CD4-positive, alpha-beta T cell (primary cell): ENCODE measurements at regions of chr5 and their contacts with region 1.

Region 1: GRCh38 chr5:126600631-126601511 is at the start of gene PHAX:
- DNase-seq: peak; percentile 43 to 88 (median 66)
- ATAC-seq: peak; percentile 93
- H3K4me3 ChIP-seq: peak within 1 kb of the TSS; percentile 82
- H3K4me3 Mint-ChIP-seq: peak within 1 kb of the TSS; percentile 92
- H3K27ac ChIP-seq: peak within 1 kb of the TSS; percentile 61 to 66
- H3K27ac Mint-ChIP-seq: peak within 1 kb of the TSS; percentile 79
- H3K4me1 ChIP-seq: peaks cover 26% of the 10 kb centered on the region
- H3K4me1 Mint-ChIP-seq: peaks cover 36% of the 10 kb centered on the region
- H3K27me3 ChIP-seq: no peaks in the 10 kb centered on the region
- H3K27me3 Mint-ChIP-seq: no peaks in the 10 kb centered on the region
- CTCF ChIP-seq: peak; percentile 69
- total RNA-seq, gene PHAX: 31.2 to 32.9 TPM

Region 2: GRCh38 chr5:126339215-126339805 is 261.6 kb before region 1 on chr5:
- CTCF ChIA-PET with region 1: interaction called, 6 read pairs
- POLR2A ChIA-PET with region 1: no interaction called
- intact Hi-C with region 1: loop called (anchors 1 to 5 kb)
- DNase-seq: peak in 10 of 14 experiments; percentile 12 to 79 (median 40)
- ATAC-seq: peak; percentile 46
- H3K4me3 ChIP-seq: no peak overlapping the region
- H3K4me3 Mint-ChIP-seq: no peak overlapping the region
- H3K27ac ChIP-seq: no peak overlapping the region
- H3K27ac Mint-ChIP-seq: no peak overlapping the region
- H3K4me1 ChIP-seq: no peaks in the 10 kb centered on the region
- H3K4me1 Mint-ChIP-seq: no peaks in the 10 kb centered on the region
- H3K27me3 ChIP-seq: peaks cover 4 to 21% of the 10 kb centered on the region in 2 experiments
- H3K27me3 Mint-ChIP-seq: peaks cover 42% of the 10 kb centered on the region
- CTCF ChIP-seq: peak; percentile 82

Region 3: GRCh38 chr5:126354012-126354857 is 246.6 kb before region 1 on chr5:
- CTCF ChIA-PET with region 1: interaction called, 3 read pairs
- POLR2A ChIA-PET with region 1: no interaction called
- intact Hi-C with region 1: loop called (anchors 1 to 2 kb)
- DNase-seq: peak in 3 of 14 experiments; percentile 57 to 70 (median 68)
- ATAC-seq: peak; percentile 74
- H3K4me3 ChIP-seq: no peak overlapping the region
- H3K4me3 Mint-ChIP-seq: peak overlapping the region; percentile 13
- H3K27ac ChIP-seq: no peak overlapping the region
- H3K27ac Mint-ChIP-seq: no peak overlapping the region
- H3K4me1 ChIP-seq: peaks cover 7% of the 10 kb centered on the region
- H3K4me1 Mint-ChIP-seq: peaks cover 16% of the 10 kb centered on the region
- H3K27me3 ChIP-seq: no peaks in the 10 kb centered on the region
- H3K27me3 Mint-ChIP-seq: peaks cover 4% of the 10 kb centered on the region
- CTCF ChIP-seq: peak; percentile 78

Region 4: DNA sequence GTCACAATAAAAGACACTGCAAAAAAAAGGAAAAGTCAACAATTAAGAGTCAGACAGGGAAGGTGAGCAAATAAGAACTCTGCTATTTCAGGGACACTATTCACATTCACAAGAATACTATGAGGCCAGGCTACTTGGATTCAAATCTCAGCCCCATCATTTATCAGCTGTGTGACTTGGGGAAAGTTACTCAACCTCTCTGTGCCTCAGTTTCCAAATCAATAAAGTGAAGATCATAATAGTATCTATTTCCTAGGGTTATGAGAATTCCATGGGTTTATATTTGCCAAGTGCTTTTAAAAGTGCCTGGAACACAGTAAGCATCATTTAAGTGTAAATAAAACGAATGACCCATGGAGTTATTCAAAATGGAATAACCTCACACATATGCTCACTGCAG is 62.3 kb before region 1 on chr5:
- CTCF ChIA-PET with region 1: interaction called, 4 read pairs
- POLR2A ChIA-PET with region 1: no interaction called
- intact Hi-C with region 1: loop called (anchors 1 to 5 kb)
- DNase-seq: no peak
- ATAC-seq: no peak
- H3K4me3 ChIP-seq: no peak overlapping the region
- H3K4me3 Mint-ChIP-seq: no peak overlapping the region
- H3K27ac ChIP-seq: no peak overlapping the region
- H3K27ac Mint-ChIP-seq: no peak overlapping the region
- H3K4me1 ChIP-seq: no peaks in the 10 kb centered on the region
- H3K4me1 Mint-ChIP-seq: peaks cover 5% of the 10 kb centered on the region
- H3K27me3 ChIP-seq: no peaks in the 10 kb centered on the region
- H3K27me3 Mint-ChIP-seq: no peaks in the 10 kb centered on the region
- CTCF ChIP-seq: no peak

Region 5: GRCh38 chr5:126544087-126544740 is 56.7 kb before region 1 on chr5:
- CTCF ChIA-PET with region 1: no interaction called
- POLR2A ChIA-PET with region 1: no interaction called
- intact Hi-C with region 1: loop called (anchors 1 to 5 kb)
- DNase-seq: peak in 10 of 14 experiments; percentile 3 to 46 (median 20)
- ATAC-seq: peak; percentile 49
- H3K4me3 ChIP-seq: no peak overlapping the region
- H3K4me3 Mint-ChIP-seq: no peak overlapping the region
- H3K27ac ChIP-seq: no peak overlapping the region
- H3K27ac Mint-ChIP-seq: no peak overlapping the region
- H3K4me1 ChIP-seq: no peaks in the 10 kb centered on the region
- H3K4me1 Mint-ChIP-seq: peaks cover 2% of the 10 kb centered on the region
- H3K27me3 ChIP-seq: no peaks in the 10 kb centered on the region
- H3K27me3 Mint-ChIP-seq: no peaks in the 10 kb centered on the region
- CTCF ChIP-seq: no peak

Region 6: GRCh38 chr5:126613941-126614592 is 13.2 kb after region 1 on chr5:
- CTCF ChIA-PET with region 1: interaction called, 10 read pairs
- POLR2A ChIA-PET with region 1: no interaction called
- intact Hi-C with region 1: no loop called
- DNase-seq: no peak
- ATAC-seq: no peak
- H3K4me3 ChIP-seq: no peak overlapping the region
- H3K4me3 Mint-ChIP-seq: no peak overlapping the region
- H3K27ac ChIP-seq: no peak overlapping the region
- H3K27ac Mint-ChIP-seq: no peak overlapping the region
- H3K4me1 ChIP-seq: no peaks in the 10 kb centered on the region
- H3K4me1 Mint-ChIP-seq: peaks cover 31% of the 10 kb centered on the region
- H3K27me3 ChIP-seq: no peaks in the 10 kb centered on the region
- H3K27me3 Mint-ChIP-seq: no peaks in the 10 kb centered on the region
- CTCF ChIP-seq: no peak

Region 7: DNA sequence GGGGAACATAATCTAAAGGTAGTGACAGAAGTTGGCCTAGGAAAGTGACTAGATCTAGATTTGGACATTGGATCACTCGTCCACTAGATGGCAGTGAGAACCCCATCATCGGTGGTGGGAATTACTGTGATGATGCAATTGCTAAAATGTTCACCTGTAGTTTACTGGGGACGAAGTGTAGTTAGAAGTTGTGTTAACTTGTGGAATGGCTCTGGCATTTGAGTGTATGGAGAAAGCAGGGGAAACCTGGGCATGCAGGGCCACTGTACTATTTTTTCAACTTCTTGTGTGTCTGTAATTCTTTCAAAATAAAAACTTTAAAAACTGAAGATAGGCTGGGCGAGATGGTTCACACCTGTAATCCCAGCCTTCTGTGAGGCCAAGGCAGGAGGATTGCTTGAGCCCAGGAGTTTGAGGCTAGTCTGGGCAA is 75.3 kb after region 1 on chr5:
- CTCF ChIA-PET with region 1: no interaction called
- POLR2A ChIA-PET with region 1: no interaction called
- intact Hi-C with region 1: no loop called
- DNase-seq: peak; percentile 39 to 86 (median 54)
- ATAC-seq: peak; percentile 90
- H3K4me3 ChIP-seq: no peak overlapping the region
- H3K4me3 Mint-ChIP-seq: no peak overlapping the region
- H3K27ac ChIP-seq: no peak overlapping the region
- H3K27ac Mint-ChIP-seq: no peak overlapping the region
- H3K4me1 ChIP-seq: peaks cover 4% of the 10 kb centered on the region
- H3K4me1 Mint-ChIP-seq: peaks cover 5% of the 10 kb centered on the region
- H3K27me3 ChIP-seq: no peaks in the 10 kb centered on the region
- H3K27me3 Mint-ChIP-seq: no peaks in the 10 kb centered on the region
- CTCF ChIP-seq: peak; percentile 82

Region 8: DNA sequence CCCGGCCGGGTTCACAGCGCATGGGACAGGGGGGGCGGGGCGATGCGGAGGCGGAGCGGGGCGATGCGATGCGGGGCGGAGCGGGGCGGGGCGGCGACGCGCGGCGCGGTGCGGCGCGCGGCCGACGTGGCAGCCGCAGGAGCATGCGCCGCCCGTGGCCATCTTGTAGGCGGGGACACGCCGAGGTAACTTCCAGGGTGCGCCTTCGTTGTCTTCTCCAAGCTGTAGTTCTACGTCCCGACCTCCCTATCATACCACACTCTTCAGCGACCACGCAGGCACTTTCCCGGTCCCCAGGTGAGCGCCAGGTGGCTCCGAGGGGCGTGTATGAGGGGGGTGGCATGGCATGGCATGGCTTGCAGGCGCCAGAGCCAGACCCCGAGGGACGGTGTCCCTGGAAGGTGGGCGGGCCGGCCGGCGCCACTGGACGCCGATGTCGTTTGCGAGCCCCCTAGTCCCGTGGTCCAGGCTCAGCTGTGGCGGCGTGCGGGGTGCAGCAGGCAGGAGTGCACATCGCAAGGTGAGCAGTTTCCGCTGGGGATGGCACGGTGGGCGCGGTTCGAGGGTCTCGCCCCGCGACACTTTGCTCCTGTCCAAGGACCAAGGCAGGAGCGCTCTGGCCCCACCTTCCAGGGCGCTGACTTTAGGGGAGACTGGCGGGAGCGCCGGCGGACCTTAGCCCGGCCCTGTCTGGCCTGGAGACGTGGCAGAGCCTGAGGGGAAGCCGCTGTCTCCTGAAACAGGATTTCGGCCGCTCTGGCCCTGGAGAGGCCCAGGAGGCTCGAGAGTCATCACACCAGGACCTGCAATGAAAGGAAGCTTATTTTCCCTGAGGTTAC is 916.8 kb after region 1 on chr5 and contains the start of gene PRRC1:
- CTCF ChIA-PET with region 1: no interaction called
- POLR2A ChIA-PET with region 1: no interaction called
- intact Hi-C with region 1: loop called in 1 of 2 experiments (anchors 2 kb)
- DNase-seq: peak; percentile 64 to 92 (median 76)
- ATAC-seq: peak; percentile 94
- H3K4me3 ChIP-seq: peak within 1 kb of the TSS; percentile 97
- H3K4me3 Mint-ChIP-seq: peak within 1 kb of the TSS; percentile 97
- H3K27ac ChIP-seq: peak within 1 kb of the TSS; percentile 68 to 76
- H3K27ac Mint-ChIP-seq: peak within 1 kb of the TSS; percentile 82
- H3K4me1 ChIP-seq: peaks cover 15% of the 10 kb centered on the region
- H3K4me1 Mint-ChIP-seq: peaks cover 44% of the 10 kb centered on the region
- H3K27me3 ChIP-seq: no peaks in the 10 kb centered on the region
- H3K27me3 Mint-ChIP-seq: peaks cover 6% of the 10 kb centered on the region
- CTCF ChIP-seq: no peak
- total RNA-seq, gene PRRC1: 32.0 to 33.8 TPM